Activated CD4-positive, alpha-beta memory T cell treated with anti-CD3 and anti-CD28 coated beads for 36 hours (primary cell): ENCODE measurements at regions of chr16 and their contacts with region 1.

Region 1: GRCh38 chr16:58000706-58001676 is at the start of gene USB1:
- DNase-seq: peak; percentile 87
- H3K4me3 Mint-ChIP-seq: peak within 1 kb of the TSS; percentile 91
- H3K27ac Mint-ChIP-seq: peak within 1 kb of the TSS; percentile 81
- H3K4me1 Mint-ChIP-seq: peaks cover 52% of the 10 kb centered on the region
- H3K27me3 Mint-ChIP-seq: no peaks in the 10 kb centered on the region
- total RNA-seq, gene USB1: 42.2 to 46.0 TPM

Region 2: GRCh38 chr16:57734925-57735754 is 265.9 kb before region 1 on chr16:
- CTCF ChIA-PET with region 1: interaction called, 8 read pairs
- POLR2A ChIA-PET with region 1: interaction called, 5 read pairs
- intact Hi-C with region 1: loop called (anchors 2 kb)
- DNase-seq: peak; percentile 98
- H3K4me3 Mint-ChIP-seq: peak overlapping the region; percentile 99
- H3K27ac Mint-ChIP-seq: peak overlapping the region; percentile 87
- H3K4me1 Mint-ChIP-seq: peaks cover 27% of the 10 kb centered on the region
- H3K27me3 Mint-ChIP-seq: peaks cover 2% of the 10 kb centered on the region

Region 3: GRCh38 chr16:57795431-57795878 is 205.5 kb before region 1 on chr16:
- CTCF ChIA-PET with region 1: interaction called, 7 read pairs
- POLR2A ChIA-PET with region 1: no interaction called
- intact Hi-C with region 1: loop called (anchors 10 kb)
- DNase-seq: peak; percentile 52
- H3K4me3 Mint-ChIP-seq: no peak overlapping the region
- H3K27ac Mint-ChIP-seq: peak overlapping the region; percentile 33
- H3K4me1 Mint-ChIP-seq: peaks cover 12% of the 10 kb centered on the region
- H3K27me3 Mint-ChIP-seq: peaks cover 5% of the 10 kb centered on the region

Region 4: DNA sequence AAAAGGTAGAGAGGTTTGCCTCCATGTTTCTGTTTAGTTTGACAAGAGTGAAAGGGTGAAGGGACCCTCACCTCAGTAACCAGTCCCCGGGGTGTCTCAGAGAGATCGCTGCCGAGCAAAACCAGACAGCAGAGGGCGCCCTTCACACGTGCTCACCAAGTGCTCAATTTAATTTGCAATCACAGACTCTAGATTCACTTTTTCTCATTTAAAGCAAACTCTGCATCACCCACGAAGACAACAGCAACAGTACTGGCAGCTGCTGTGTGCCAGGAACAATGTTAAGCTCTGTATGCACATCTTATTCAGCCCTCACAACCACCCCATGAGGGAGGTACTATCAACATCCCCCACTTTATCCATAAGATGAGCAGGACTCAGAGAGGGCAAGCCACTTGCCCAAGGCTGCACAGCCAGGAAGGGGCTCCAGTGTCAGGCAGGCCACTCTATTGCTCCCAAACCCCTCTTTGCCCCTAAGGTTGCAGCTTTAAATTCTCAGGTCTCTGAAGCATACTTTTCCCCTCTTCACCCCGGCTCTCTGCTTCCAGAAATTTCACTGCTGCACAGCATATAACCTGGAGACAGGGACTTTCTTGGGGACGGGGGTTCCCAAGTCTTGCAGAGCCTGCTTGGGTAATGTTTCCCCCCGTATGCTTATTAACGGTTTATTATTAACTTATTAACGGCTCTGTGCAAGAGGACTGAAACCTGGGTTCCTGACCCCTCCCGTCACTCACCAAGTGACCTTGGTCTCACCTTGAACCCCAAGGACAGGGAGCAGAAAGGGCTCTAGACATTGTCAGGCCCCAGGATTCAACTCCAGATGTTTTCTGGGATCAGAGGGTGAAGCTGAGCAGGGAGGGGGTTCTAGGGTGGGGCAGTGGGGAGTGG is 101.0 kb before region 1 on chr16:
- CTCF ChIA-PET with region 1: interaction called, 21 read pairs
- POLR2A ChIA-PET with region 1: no interaction called
- intact Hi-C with region 1: loop called (anchors 1 kb)
- DNase-seq: peak; percentile 84
- H3K4me3 Mint-ChIP-seq: peak overlapping the region; percentile 25
- H3K27ac Mint-ChIP-seq: no peak overlapping the region
- H3K4me1 Mint-ChIP-seq: peaks cover 4% of the 10 kb centered on the region
- H3K27me3 Mint-ChIP-seq: peaks cover 19% of the 10 kb centered on the region

Region 5: GRCh38 chr16:58025351-58026138 is 24.6 kb after region 1 on chr16 and contains the start of gene MMP15:
- CTCF ChIA-PET with region 1: interaction called, 3 read pairs
- POLR2A ChIA-PET with region 1: interaction called, 4 read pairs
- intact Hi-C with region 1: loop called (anchors 1 kb)
- DNase-seq: peak; percentile 77
- H3K4me3 Mint-ChIP-seq: peak within 1 kb of the TSS; percentile 81
- H3K27ac Mint-ChIP-seq: peak within 1 kb of the TSS; percentile 56
- H3K4me1 Mint-ChIP-seq: peaks cover 9% of the 10 kb centered on the region
- H3K27me3 Mint-ChIP-seq: no peaks in the 10 kb centered on the region
- total RNA-seq, gene MMP15: 0.46 to 0.71 TPM